MCF 10A (cell line): ENCODE measurements at regions of chr3 and their contacts with region 1.

Region 1: GRCh38 chr3:184711493-184712247 is at the start of gene MAGEF1:
- DNase-seq: peak; percentile 77
- H3K4me3 Mint-ChIP-seq: peak within 1 kb of the TSS; percentile 84
- H3K27ac Mint-ChIP-seq: peak within 1 kb of the TSS; percentile 43
- H3K4me1 Mint-ChIP-seq: peaks cover 34% of the 10 kb centered on the region
- H3K27me3 Mint-ChIP-seq: no peaks in the 10 kb centered on the region
- CTCF ChIP-seq: no peak
- total RNA-seq, gene MAGEF1: 34.5 and 41.2 TPM in 2 replicates

Region 2: GRCh38 chr3:184135149-184135910 is 576.3 kb before region 1 on chr3 and contains the start of gene EIF2B5:
- CTCF ChIA-PET with region 1: no interaction called
- POLR2A ChIA-PET with region 1: no interaction called
- intact Hi-C with region 1: no loop called
- DNase-seq: peak; percentile 93
- H3K4me3 Mint-ChIP-seq: peak within 1 kb of the TSS; percentile 99
- H3K27ac Mint-ChIP-seq: peak within 1 kb of the TSS; percentile 83
- H3K4me1 Mint-ChIP-seq: peaks cover 21% of the 10 kb centered on the region
- H3K27me3 Mint-ChIP-seq: no peaks in the 10 kb centered on the region
- CTCF ChIP-seq: peak; percentile 22
- total RNA-seq, gene EIF2B5: 33.8 and 36.1 TPM in 2 replicates

Region 3: DNA sequence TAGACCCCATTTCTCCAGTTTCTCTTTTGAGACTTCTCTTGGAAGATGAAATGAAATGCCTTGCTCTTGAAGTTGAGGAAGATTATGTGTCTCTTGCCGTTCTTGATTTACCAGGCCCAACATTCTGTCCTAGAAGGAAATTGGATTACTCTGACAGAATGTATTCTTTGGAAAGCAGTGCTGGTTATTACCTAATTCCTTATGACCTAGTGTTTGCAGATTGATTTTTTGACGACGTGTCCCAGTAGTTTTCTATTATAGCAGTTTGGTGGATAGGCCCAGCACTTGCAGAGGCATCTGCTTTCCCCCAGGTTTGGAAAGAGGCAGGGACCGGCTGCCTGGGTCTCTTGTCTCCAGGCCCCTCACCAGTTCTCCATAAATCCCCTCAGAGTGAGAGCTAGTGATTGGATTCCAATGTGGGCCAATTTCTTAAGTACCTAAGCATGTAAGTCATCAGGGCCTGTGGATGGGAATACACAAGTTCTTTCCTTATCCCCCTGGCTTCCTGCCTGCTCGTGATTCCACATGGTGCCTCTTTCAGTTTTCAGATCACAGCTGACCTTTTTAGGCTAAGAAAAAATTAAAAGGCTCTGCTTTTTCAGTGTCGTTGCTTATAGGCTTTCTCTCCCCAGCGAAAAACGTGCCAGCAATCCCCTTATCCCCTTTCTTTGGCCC is 99.9 kb before region 1 on chr3:
- CTCF ChIA-PET with region 1: no interaction called
- POLR2A ChIA-PET with region 1: no interaction called
- intact Hi-C with region 1: no loop called
- DNase-seq: no peak
- H3K4me3 Mint-ChIP-seq: no peak overlapping the region
- H3K27ac Mint-ChIP-seq: no peak overlapping the region
- H3K4me1 Mint-ChIP-seq: no peaks in the 10 kb centered on the region
- H3K27me3 Mint-ChIP-seq: no peaks in the 10 kb centered on the region
- CTCF ChIP-seq: no peak

Region 4: DNA sequence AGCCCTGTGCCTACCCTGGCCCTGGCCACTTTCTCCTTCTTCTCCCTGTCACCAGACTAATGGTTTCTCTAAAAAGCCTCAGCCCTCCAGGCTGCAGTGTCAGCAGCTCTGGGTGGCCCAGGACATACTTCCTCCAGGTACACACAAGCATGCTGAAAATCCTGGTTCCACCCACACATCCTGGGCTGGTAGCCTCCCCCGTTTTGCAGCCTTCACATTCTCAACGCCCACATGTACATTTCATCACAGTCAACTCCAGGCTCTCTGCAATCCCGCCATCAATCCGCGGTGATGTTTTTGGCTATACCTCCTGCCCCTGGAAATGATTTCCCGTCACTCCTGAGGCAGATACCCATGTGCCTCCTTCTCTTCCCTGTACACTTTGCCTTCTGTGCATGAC is 59.2 kb before region 1 on chr3:
- CTCF ChIA-PET with region 1: no interaction called
- POLR2A ChIA-PET with region 1: interaction called, 18 read pairs
- intact Hi-C with region 1: no loop called
- DNase-seq: peak; percentile 92
- H3K4me3 Mint-ChIP-seq: peak overlapping the region; percentile 20
- H3K27ac Mint-ChIP-seq: peak overlapping the region; percentile 89
- H3K4me1 Mint-ChIP-seq: peaks cover 27% of the 10 kb centered on the region
- H3K27me3 Mint-ChIP-seq: no peaks in the 10 kb centered on the region
- CTCF ChIP-seq: no peak

Region 5: GRCh38 chr3:184696697-184697096 is 15.0 kb before region 1 on chr3:
- CTCF ChIA-PET with region 1: interaction called, 4 read pairs
- POLR2A ChIA-PET with region 1: interaction called, 24 read pairs
- intact Hi-C with region 1: no loop called
- DNase-seq: peak; percentile 49
- H3K4me3 Mint-ChIP-seq: no peak overlapping the region
- H3K27ac Mint-ChIP-seq: no peak overlapping the region
- H3K4me1 Mint-ChIP-seq: peaks cover 13% of the 10 kb centered on the region
- H3K27me3 Mint-ChIP-seq: no peaks in the 10 kb centered on the region
- CTCF ChIP-seq: no peak

Region 6: GRCh38 chr3:184740524-184741484 is 29.1 kb after region 1 on chr3:
- CTCF ChIA-PET with region 1: interaction called, 3 read pairs
- POLR2A ChIA-PET with region 1: interaction called, 41 read pairs
- intact Hi-C with region 1: no loop called
- DNase-seq: peak; percentile 96
- H3K4me3 Mint-ChIP-seq: peak overlapping the region; percentile 68
- H3K27ac Mint-ChIP-seq: peak overlapping the region; percentile 93
- H3K4me1 Mint-ChIP-seq: peaks cover 48% of the 10 kb centered on the region
- H3K27me3 Mint-ChIP-seq: no peaks in the 10 kb centered on the region
- CTCF ChIP-seq: no peak

Region 7: GRCh38 chr3:184765730-184766074 is 54.0 kb after region 1 on chr3:
- CTCF ChIA-PET with region 1: no interaction called
- POLR2A ChIA-PET with region 1: interaction called, 59 read pairs
- intact Hi-C with region 1: no loop called
- DNase-seq: peak; percentile 84
- H3K4me3 Mint-ChIP-seq: peak overlapping the region; percentile 59
- H3K27ac Mint-ChIP-seq: peak overlapping the region; percentile 89
- H3K4me1 Mint-ChIP-seq: peaks cover 31% of the 10 kb centered on the region
- H3K27me3 Mint-ChIP-seq: no peaks in the 10 kb centered on the region
- CTCF ChIP-seq: no peak